CD4-positive, alpha-beta T cell (primary cell): ENCODE measurements at regions of chr7 and their contacts with region 1.

Region 1: DNA sequence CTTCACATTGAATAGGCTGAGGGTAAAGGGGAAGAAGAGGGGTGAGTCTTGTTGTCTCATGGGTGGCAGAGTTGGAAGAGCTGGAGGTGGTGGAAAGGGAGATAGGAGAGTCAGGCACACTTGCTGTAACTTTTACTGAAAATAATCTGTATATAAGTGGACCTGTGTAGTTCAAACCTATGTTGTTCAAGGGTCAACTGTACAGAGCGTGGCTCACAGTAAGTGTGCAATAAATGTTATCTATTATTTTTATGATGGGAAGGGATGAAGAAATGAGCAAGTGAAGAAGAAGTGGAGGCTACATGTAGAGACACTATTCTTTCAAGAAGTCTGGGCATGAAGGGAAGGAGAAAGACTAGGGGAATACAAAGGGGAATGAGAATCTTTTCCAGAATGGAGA is 71.5 kb upstream of the FAM133B start:
- DNase-seq: no peak
- ATAC-seq: no peak
- H3K4me3 ChIP-seq: no peak overlapping the region
- H3K4me3 Mint-ChIP-seq: no peak overlapping the region
- H3K27ac ChIP-seq: no peak overlapping the region
- H3K27ac Mint-ChIP-seq: no peak overlapping the region
- H3K4me1 ChIP-seq: peaks cover 4% of the 10 kb centered on the region
- H3K4me1 Mint-ChIP-seq: peaks cover 11% of the 10 kb centered on the region
- H3K27me3 ChIP-seq: no peaks in the 10 kb centered on the region
- H3K27me3 Mint-ChIP-seq: no peaks in the 10 kb centered on the region
- CTCF ChIP-seq: no peak

Region 2: DNA sequence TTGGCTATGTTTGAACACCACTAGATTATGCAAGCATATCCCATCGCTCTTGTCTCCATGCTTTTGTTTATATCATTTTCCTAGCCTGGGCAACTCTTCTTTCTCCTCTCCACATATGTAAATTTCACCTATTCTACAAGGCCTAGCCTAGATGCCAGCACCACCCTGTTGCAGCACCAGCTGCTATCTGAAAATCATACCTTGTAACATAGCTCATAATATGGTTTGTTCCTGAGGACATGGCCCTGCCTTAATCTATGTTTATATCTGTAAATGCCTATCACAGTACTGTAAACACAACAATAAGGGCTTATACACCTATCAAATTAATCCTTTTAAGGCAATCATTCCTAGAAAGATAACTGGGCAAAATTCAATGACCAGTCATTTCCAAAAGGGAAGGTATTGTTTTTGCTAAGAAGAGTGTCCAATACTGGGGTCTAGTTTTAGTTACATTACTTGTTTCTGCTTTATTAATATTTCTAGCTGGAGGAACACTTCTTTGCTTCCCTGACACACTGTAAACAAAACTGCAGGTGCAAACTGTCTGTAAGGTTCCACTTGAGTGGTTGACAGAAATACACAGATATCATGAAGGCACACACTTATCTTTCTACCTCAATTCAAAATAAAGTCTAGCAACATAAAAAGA is 12.6 kb after region 1 on chr7:
- CTCF ChIA-PET with region 1: no interaction called
- POLR2A ChIA-PET with region 1: no interaction called
- intact Hi-C with region 1: loop called in 1 of 2 experiments (anchors 1 kb)
- DNase-seq: no peak
- ATAC-seq: no peak
- H3K4me3 ChIP-seq: no peak overlapping the region
- H3K4me3 Mint-ChIP-seq: no peak overlapping the region
- H3K27ac ChIP-seq: no peak overlapping the region
- H3K27ac Mint-ChIP-seq: no peak overlapping the region
- H3K4me1 ChIP-seq: peaks cover 3% of the 10 kb centered on the region
- H3K4me1 Mint-ChIP-seq: peaks cover 4% of the 10 kb centered on the region
- H3K27me3 ChIP-seq: no peaks in the 10 kb centered on the region
- H3K27me3 Mint-ChIP-seq: no peaks in the 10 kb centered on the region
- CTCF ChIP-seq: no peak

Region 3: DNA sequence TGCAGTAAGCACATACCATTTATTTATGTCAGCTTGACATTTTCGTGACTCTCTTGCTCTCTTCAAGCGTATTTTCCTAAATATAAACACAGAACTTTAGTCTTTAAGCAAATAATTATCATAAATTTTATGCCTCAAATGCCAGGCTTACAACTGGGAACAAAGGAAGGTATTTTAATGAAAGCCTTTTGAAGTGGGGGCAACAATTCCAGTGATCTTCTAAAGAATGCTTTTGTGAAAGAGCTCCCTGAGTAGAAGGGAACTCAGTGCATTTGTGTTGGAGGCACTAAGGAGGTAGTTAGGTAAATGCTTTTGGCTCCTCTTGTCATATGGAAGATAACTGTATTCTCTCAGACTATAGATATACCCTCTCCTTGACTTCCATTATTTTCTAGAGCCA is 675.4 kb after region 1 on chr7:
- CTCF ChIA-PET with region 1: no interaction called
- POLR2A ChIA-PET with region 1: no interaction called
- intact Hi-C with region 1: no loop called
- DNase-seq: no peak
- ATAC-seq: no peak
- H3K4me3 ChIP-seq: no peak overlapping the region
- H3K4me3 Mint-ChIP-seq: no peak overlapping the region
- H3K27ac ChIP-seq: no peak overlapping the region
- H3K27ac Mint-ChIP-seq: no peak overlapping the region
- H3K4me1 ChIP-seq: no peaks in the 10 kb centered on the region
- H3K4me1 Mint-ChIP-seq: no peaks in the 10 kb centered on the region
- H3K27me3 ChIP-seq: no peaks in the 10 kb centered on the region
- H3K27me3 Mint-ChIP-seq: no peaks in the 10 kb centered on the region
- CTCF ChIP-seq: no peak